ENCODE measurements at regions of chr3 and their contacts with region 1.

Region 1: GRCh38 chr3:126982471-126983175 is at the start of gene PLXNA1:
- DNase-seq: peak; percentile 44
- ATAC-seq: peak; percentile 61
- H3K4me3 ChIP-seq: peak within 1 kb of the TSS; percentile 59 to 92 (median 81); a peak in 5 of 6 replicates
- H3K27ac ChIP-seq: peak within 1 kb of the TSS; percentile 55
- H3K4me1 ChIP-seq: peaks cover 39% of the 10 kb centered on the region
- H3K27me3 ChIP-seq: peaks cover 2 to 16% of the 10 kb centered on the region in 2 experiments; a peak in 3 of 5 replicates
- CTCF ChIP-seq: peak; percentile 91
- EP300 ChIP-seq: no peak
- POLR2A ChIP-seq: no peak
- RAD21 ChIP-seq: peak; percentile 81
- total RNA-seq, gene PLXNA1: 8.5 and 16.6 TPM in 2 replicates

Region 2: GRCh38 chr3:127074728-127075360 is 92.2 kb after region 1 on chr3:
- CTCF ChIA-PET with region 1: no interaction called
- POLR2A ChIA-PET with region 1: no interaction called
- in situ Hi-C with region 1: no loop called
- intact Hi-C with region 1: no loop called
- DNase-seq: no peak
- ATAC-seq: peak; percentile 67
- H3K4me3 ChIP-seq: no peak overlapping the region
- H3K27ac ChIP-seq: no peak overlapping the region
- H3K4me1 ChIP-seq: no peaks in the 10 kb centered on the region
- H3K27me3 ChIP-seq: peaks cover 9 to 58% of the 10 kb centered on the region in 2 experiments
- CTCF ChIP-seq: no peak
- EP300 ChIP-seq: no peak
- POLR2A ChIP-seq: no peak
- RAD21 ChIP-seq: no peak

Region 3: GRCh38 chr3:127544192-127544802 is 561.7 kb after region 1 on chr3:
- CTCF ChIA-PET with region 1: no interaction called
- POLR2A ChIA-PET with region 1: no interaction called
- in situ Hi-C with region 1: no loop called
- intact Hi-C with region 1: loop called (anchors 10 kb)
- DNase-seq: peak; percentile 70
- ATAC-seq: peak; percentile 86
- H3K4me3 ChIP-seq: peak overlapping the region in 1 of 3 experiments; percentile 12; a peak in 1 of 6 replicates
- H3K27ac ChIP-seq: no peak overlapping the region
- H3K4me1 ChIP-seq: peaks cover 52% of the 10 kb centered on the region
- H3K27me3 ChIP-seq: peaks cover 4 to 15% of the 10 kb centered on the region in 2 experiments; a peak in 3 of 5 replicates
- CTCF ChIP-seq: peak; percentile 91
- EP300 ChIP-seq: no peak
- POLR2A ChIP-seq: no peak
- RAD21 ChIP-seq: peak; percentile 57